AG04450 (cell line): ENCODE measurements at regions of chr12 and their contacts with region 1.

Region 1: DNA sequence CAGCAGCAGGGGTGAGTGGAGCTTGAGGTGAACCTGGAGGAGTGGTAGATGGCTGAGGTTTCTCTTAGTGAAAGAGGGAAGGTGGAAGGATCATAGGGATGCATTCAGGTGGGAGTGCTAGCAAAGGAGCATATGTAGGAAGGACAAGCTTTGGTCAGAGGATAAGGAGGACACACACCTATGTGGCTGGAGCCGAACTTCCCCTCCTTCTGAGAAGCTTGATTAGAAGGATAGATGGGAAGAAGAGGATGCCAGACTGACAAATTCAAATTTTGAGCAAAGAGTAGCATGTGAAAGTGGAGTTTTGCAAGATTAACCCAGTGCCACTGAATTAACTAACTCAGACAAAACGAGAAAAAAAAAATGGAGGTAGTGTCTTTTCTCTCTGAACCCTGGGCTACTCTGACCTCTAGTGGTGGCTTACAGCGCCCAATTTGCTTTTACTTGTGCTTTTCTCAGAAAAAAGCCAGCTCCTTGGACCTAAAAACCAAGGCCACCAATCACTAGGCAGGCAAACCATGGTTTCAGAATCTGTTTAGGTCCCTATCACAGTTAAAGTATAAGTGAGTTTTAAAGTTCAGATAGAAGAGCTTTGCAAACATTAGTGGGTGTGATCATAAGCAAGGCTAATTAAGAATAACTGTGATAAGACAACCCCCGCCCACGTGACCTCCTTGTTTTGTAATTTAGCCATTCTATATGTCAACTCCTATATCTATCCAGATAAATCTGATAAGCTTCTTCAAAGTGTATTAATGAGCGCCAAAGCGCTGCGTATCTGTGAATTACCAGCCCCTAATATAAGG is 15.5 kb downstream of the EMP1 start:
- DNase-seq: no peak
- H3K4me3 ChIP-seq: no peak overlapping the region
- H3K27ac ChIP-seq: no peak overlapping the region
- H3K27me3 ChIP-seq: no peaks in the 10 kb centered on the region
- CTCF ChIP-seq: peak; percentile 86

Region 2: GRCh38 chr12:12786716-12787601 is 425.1 kb before region 1 on chr12:
- CTCF ChIA-PET with region 1: interaction called, 33 read pairs
- POLR2A ChIA-PET with region 1: no interaction called
- DNase-seq: no peak
- H3K4me3 ChIP-seq: peak overlapping the region; percentile 63
- H3K27ac ChIP-seq: peak overlapping the region; percentile 84
- H3K27me3 ChIP-seq: no peaks in the 10 kb centered on the region
- CTCF ChIP-seq: no peak

Region 3: GRCh38 chr12:12983420-12984035 is 228.5 kb before region 1 on chr12:
- CTCF ChIA-PET with region 1: interaction called, 67 read pairs
- POLR2A ChIA-PET with region 1: interaction called, 7 read pairs
- DNase-seq: no peak
- H3K4me3 ChIP-seq: no peak overlapping the region
- H3K27ac ChIP-seq: no peak overlapping the region
- H3K27me3 ChIP-seq: no peaks in the 10 kb centered on the region
- CTCF ChIP-seq: peak; percentile 69

Region 4: GRCh38 chr12:13008741-13009380 is 203.2 kb before region 1 on chr12:
- CTCF ChIA-PET with region 1: interaction called, 15 read pairs
- POLR2A ChIA-PET with region 1: interaction called, 4 read pairs
- DNase-seq: no peak
- H3K4me3 ChIP-seq: no peak overlapping the region
- H3K27ac ChIP-seq: peak overlapping the region; percentile 78
- H3K27me3 ChIP-seq: no peaks in the 10 kb centered on the region
- CTCF ChIP-seq: no peak

Region 5: DNA sequence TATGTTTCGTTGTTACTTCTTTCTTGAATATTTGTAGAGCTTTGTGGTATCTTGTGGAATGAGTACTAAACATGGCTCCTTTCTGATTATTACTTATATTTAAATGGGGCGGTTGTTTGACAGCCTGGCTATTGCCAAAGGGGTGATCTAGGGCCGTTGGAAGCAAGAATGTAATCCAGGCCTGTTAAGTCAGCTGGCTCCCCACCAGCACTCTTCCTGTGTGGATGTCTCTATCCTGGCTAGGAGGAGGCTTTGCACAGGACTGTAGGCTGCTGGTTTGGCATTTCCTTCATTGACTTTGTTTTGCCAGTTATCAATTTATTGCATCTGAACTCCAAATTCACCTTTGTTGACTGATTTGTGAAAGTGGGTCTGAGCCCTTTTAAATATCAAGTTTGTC is 162.2 kb before region 1 on chr12:
- CTCF ChIA-PET with region 1: interaction called, 35 read pairs
- POLR2A ChIA-PET with region 1: no interaction called
- DNase-seq: no peak
- H3K4me3 ChIP-seq: no peak overlapping the region
- H3K27ac ChIP-seq: no peak overlapping the region
- H3K27me3 ChIP-seq: no peaks in the 10 kb centered on the region
- CTCF ChIP-seq: no peak

Region 6: DNA sequence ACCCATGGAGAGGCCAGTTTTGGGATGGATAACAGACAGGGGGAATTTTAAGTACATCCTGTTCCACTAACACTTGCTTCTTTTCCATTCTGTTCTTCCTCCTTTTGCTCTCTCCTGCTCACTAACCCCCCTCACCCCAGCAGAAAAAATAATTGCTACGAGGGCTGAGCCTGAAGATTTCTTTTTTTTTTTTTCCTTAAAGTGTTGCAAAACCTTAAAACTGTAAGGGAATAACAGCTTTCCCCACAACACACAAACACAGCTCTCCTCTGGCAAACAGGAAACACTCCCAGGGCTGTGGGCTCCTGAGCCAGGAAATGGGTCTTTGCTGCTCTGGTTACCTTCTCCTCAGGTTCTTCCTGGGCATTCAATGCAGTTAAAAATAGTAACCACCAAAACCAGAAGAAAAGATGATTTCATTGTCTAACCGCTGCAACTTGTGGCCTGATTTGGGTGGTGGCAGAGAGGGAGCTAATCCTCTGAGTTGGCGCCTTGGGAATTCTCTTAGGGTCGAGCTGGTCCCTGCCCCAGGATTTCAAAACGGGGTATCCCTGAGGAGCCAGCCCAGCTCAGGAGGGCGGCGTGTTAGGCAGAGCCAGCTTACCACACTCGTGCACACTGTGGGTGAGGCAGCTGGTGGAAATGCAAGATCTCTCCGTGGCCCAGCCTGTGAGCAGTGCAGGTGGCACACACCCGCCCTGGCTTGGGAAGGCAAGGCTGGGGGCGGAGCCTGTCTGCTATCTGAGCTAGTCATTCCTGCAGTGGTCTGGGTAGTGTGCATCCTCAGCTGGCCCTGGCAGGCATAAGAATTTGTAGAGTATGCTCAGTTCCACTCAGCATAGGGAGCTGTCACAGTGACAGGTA is 32.6 kb before region 1 on chr12:
- CTCF ChIA-PET with region 1: interaction called, 11 read pairs
- POLR2A ChIA-PET with region 1: no interaction called
- DNase-seq: no peak
- H3K4me3 ChIP-seq: no peak overlapping the region
- H3K27ac ChIP-seq: peak overlapping the region; percentile 13
- H3K27me3 ChIP-seq: no peaks in the 10 kb centered on the region
- CTCF ChIP-seq: no peak

Region 7: GRCh38 chr12:13233830-13234641 is 22.0 kb after region 1 on chr12:
- CTCF ChIA-PET with region 1: interaction called, 22 read pairs
- POLR2A ChIA-PET with region 1: no interaction called
- DNase-seq: no peak
- H3K4me3 ChIP-seq: no peak overlapping the region
- H3K27ac ChIP-seq: no peak overlapping the region
- H3K27me3 ChIP-seq: no peaks in the 10 kb centered on the region
- CTCF ChIP-seq: peak; percentile 94

Region 8: DNA sequence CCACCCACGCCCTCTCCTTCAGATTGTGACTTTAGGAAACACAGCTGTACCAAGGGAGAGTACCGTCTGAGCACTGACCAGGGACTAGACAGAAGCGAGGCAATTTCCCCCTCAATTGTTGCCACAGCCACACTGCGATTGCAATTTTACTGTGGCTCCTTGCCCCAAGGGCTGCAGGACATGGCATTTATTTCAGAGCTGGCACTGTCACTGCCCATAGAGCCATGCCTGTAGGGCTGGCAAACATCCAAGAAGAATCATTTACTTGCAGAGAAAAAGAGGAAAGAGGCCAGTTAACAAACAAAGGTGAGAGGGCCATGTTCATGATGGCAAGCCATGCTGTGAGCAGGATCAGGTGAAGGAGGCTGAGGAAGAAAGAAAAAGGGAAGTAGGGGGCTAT is 114.0 kb after region 1 on chr12:
- CTCF ChIA-PET with region 1: no interaction called
- POLR2A ChIA-PET with region 1: no interaction called
- DNase-seq: no peak
- H3K4me3 ChIP-seq: no peak overlapping the region
- H3K27ac ChIP-seq: no peak overlapping the region
- H3K27me3 ChIP-seq: peaks cover 3% of the 10 kb centered on the region
- CTCF ChIP-seq: no peak

Region 9: GRCh38 chr12:13390381-13390861 is 178.4 kb after region 1 on chr12:
- CTCF ChIA-PET with region 1: no interaction called
- POLR2A ChIA-PET with region 1: no interaction called
- DNase-seq: no peak
- H3K4me3 ChIP-seq: no peak overlapping the region
- H3K27ac ChIP-seq: no peak overlapping the region
- H3K27me3 ChIP-seq: no peaks in the 10 kb centered on the region
- CTCF ChIP-seq: no peak

Region 10: GRCh38 chr12:13702381-13702780 is 490.3 kb after region 1 on chr12:
- CTCF ChIA-PET with region 1: no interaction called
- POLR2A ChIA-PET with region 1: no interaction called
- DNase-seq: no peak
- H3K4me3 ChIP-seq: no peak overlapping the region
- H3K27ac ChIP-seq: no peak overlapping the region
- H3K27me3 ChIP-seq: no peaks in the 10 kb centered on the region
- CTCF ChIP-seq: no peak

Region 11: DNA sequence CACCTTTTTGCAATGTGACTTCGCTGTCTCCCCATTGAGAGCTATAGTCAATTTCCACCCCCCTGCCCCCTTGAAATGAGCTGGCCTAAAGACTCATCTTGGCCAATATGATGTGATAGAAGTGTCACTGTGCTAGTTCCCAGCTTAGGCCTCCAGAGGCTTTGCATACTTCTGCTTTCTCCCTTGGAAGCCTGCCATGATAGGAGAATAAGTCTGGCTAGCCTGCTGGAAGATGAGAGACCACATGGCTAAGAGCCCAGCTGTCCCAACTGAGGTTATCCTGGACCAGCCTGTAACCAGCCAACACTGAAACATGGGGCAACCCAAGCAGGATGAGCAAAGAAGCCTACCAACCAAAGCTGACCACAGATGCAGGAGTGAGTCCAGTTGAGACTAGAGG is 572.4 kb after region 1 on chr12:
- CTCF ChIA-PET with region 1: no interaction called
- POLR2A ChIA-PET with region 1: no interaction called
- DNase-seq: no peak
- H3K4me3 ChIP-seq: no peak overlapping the region
- H3K27ac ChIP-seq: no peak overlapping the region
- H3K27me3 ChIP-seq: no peaks in the 10 kb centered on the region
- CTCF ChIP-seq: no peak